ENCODE measurements at regions of chr6 and their contacts with region 1.

Region 1: GRCh38 chr6:42453031-42453653 is 1.4 kb upstream of the TRERF1 start:
- DNase-seq: peak; percentile 82
- H3K4me3 Mint-ChIP-seq: peak overlapping the region; percentile 87
- H3K27ac Mint-ChIP-seq: no peak overlapping the region
- H3K4me1 Mint-ChIP-seq: peaks cover 34% of the 10 kb centered on the region
- H3K27me3 Mint-ChIP-seq: peaks cover 3% of the 10 kb centered on the region

Region 2: GRCh38 chr6:42367353-42368011 is 85.7 kb before region 1 on chr6:
- CTCF ChIA-PET with region 1: interaction called, 8 read pairs
- POLR2A ChIA-PET with region 1: interaction called, 11 read pairs
- DNase-seq: peak; percentile 48
- H3K4me3 Mint-ChIP-seq: peak overlapping the region; percentile 66
- H3K27ac Mint-ChIP-seq: peak overlapping the region; percentile 96
- H3K4me1 Mint-ChIP-seq: peaks cover 74% of the 10 kb centered on the region
- H3K27me3 Mint-ChIP-seq: no peaks in the 10 kb centered on the region

Region 3: DNA sequence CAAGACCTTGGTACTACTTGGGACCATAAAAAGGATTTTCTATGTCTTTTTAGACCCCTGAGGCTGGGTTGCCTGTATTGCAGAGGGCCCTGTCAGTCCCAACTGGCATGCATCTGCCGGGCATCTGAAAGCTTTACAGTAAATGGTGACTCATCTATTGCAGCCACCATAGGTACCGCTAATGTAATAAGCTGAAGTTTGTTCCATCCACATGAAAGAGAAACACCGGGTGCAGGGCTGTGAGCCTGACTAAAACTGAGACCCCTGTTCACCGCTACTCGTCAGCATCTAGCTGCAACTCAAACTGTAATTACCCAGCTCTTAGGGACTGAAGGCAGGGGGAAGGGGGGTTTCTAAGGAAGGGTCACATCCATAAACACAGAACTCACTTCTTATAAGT is 51.0 kb before region 1 on chr6:
- CTCF ChIA-PET with region 1: interaction called, 3 read pairs
- POLR2A ChIA-PET with region 1: interaction called, 14 read pairs
- DNase-seq: peak; percentile 68
- H3K4me3 Mint-ChIP-seq: peak overlapping the region; percentile 6
- H3K27ac Mint-ChIP-seq: peak overlapping the region; percentile 58
- H3K4me1 Mint-ChIP-seq: peaks cover 63% of the 10 kb centered on the region
- H3K27me3 Mint-ChIP-seq: no peaks in the 10 kb centered on the region

Region 4: GRCh38 chr6:42423244-42423643 is 29.9 kb before region 1 on chr6:
- CTCF ChIA-PET with region 1: interaction called, 6 read pairs
- POLR2A ChIA-PET with region 1: interaction called, 10 read pairs
- DNase-seq: peak; percentile 47
- H3K4me3 Mint-ChIP-seq: peak overlapping the region; percentile 43
- H3K27ac Mint-ChIP-seq: peak overlapping the region; percentile 50
- H3K4me1 Mint-ChIP-seq: peaks cover 58% of the 10 kb centered on the region
- H3K27me3 Mint-ChIP-seq: peaks cover 2% of the 10 kb centered on the region

Region 5: GRCh38 chr6:42440778-42441696 is 12.1 kb before region 1 on chr6:
- CTCF ChIA-PET with region 1: interaction called, 7 read pairs
- POLR2A ChIA-PET with region 1: interaction called, 21 read pairs
- DNase-seq: no peak
- H3K4me3 Mint-ChIP-seq: peak overlapping the region; percentile 54
- H3K27ac Mint-ChIP-seq: peak overlapping the region; percentile 58
- H3K4me1 Mint-ChIP-seq: peaks cover 58% of the 10 kb centered on the region
- H3K27me3 Mint-ChIP-seq: no peaks in the 10 kb centered on the region

Region 6: DNA sequence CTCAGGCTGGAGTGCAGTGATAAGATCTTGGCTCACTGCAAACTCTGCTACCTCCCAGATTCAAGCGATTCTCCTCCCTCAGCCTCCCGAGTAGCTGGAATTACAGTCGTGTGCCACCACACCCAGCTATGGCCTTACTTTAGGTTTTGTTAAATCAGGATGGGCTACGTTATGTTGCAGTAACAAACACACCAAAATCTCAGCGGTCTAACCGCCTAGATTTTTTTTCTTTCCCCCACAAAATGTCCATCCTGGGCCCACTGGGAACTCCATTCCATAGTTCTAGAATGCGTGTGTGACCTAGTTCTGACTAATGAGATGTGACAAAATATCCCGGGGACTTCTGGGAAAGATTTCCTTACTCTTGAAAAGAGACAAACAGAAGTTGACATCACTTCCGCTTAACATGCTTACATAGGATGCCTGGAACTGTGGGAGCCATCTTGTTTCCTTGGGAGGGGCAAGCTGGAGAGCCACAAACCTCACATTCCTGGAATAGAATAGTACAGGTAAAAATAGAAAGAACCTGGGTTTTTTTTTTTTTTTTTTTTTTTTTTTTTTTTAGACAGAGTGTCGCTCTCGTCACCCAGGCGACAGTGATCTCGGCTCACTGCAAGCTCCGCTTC is 40.9 kb after region 1 on chr6:
- CTCF ChIA-PET with region 1: no interaction called
- POLR2A ChIA-PET with region 1: no interaction called
- DNase-seq: no peak
- H3K4me3 Mint-ChIP-seq: no peak overlapping the region
- H3K27ac Mint-ChIP-seq: no peak overlapping the region
- H3K4me1 Mint-ChIP-seq: no peaks in the 10 kb centered on the region
- H3K27me3 Mint-ChIP-seq: peaks cover 27% of the 10 kb centered on the region

Region 7: DNA sequence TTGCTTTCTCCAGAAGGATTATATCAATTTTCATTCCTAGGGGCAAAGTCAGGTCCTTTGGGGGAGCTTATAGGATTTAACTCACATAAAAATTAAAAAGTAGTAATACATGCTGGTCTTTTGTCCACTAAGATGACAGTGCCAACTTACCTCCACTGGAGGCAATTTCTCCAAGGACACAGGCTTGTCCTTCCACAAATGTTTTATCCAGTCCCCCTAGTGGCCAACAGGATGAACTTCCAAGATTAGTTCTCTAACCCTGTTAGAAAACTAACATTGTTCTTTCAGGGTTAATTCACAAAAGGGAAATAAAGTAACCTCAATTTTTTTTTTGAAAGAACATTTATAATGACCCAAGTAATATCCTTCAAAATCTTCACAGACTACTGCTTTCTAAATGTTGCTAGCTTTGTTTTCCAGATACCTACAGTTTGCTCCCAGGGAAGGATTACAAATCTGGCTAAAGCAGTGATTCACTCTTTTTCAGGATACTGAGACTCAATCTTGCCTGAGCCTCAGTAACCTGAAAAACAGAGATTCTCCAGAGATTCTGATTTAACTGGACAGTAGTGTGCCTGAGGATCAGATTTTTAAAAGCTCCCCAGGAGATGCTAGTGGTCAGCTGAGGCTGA is 79.0 kb after region 1 on chr6:
- CTCF ChIA-PET with region 1: interaction called, 13 read pairs
- POLR2A ChIA-PET with region 1: interaction called, 3 read pairs
- DNase-seq: no peak
- H3K4me3 Mint-ChIP-seq: no peak overlapping the region
- H3K27ac Mint-ChIP-seq: no peak overlapping the region
- H3K4me1 Mint-ChIP-seq: no peaks in the 10 kb centered on the region
- H3K27me3 Mint-ChIP-seq: no peaks in the 10 kb centered on the region